AG04449 (cell line): ENCODE measurements at regions of chr10 and their contacts with region 1.

Region 1: GRCh38 chr10:91298224-91298871 is 77.9 kb downstream of the PCGF5 start:
- DNase-seq: no peak
- H3K4me3 ChIP-seq: peak overlapping the region; percentile 54
- CTCF ChIP-seq: peak; percentile 96

Region 2: GRCh38 chr10:90879062-90879461 is 419.3 kb before region 1 on chr10:
- CTCF ChIA-PET with region 1: interaction called, 10 read pairs
- POLR2A ChIA-PET with region 1: no interaction called
- DNase-seq: no peak
- H3K4me3 ChIP-seq: no peak overlapping the region
- CTCF ChIP-seq: no peak

Region 3: DNA sequence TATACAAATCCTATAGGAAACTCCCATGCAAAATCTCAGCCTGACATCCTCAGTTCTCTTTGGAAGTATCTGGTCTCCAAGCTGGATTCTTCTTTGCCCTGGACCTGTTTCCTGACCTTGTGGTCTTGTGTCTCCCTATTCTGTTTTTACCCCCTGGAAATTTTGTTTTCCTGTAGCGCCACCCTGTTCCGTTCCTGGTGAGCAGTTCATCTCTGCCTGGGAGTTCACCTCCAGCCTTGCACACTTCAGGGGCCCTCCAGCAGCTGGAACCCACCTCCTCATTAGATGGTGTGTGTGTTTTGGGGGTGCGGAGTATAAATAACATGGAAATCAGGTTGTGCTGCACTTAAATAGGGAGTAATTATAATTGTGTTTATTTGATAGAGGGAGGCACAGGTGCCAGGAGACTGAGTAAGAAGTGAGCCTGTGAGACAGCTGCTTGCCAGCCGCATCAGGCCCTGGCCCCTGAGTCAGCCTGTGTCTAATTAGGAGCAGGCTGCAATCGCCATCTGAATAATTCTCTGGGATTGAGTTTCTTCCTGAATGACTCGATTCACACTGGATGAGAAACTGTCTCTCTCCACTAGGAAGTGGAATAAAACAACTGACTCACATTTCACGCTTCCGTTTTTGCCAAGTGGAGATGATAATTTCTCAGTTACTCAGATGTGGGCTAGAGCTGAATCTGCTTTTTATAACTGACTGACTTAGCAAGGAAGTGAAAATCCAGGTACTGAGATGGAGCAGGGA is 42.4 kb after region 1 on chr10:
- CTCF ChIA-PET with region 1: interaction called, 13 read pairs
- POLR2A ChIA-PET with region 1: no interaction called
- DNase-seq: peak; percentile 84
- H3K4me3 ChIP-seq: no peak overlapping the region
- CTCF ChIP-seq: no peak

Region 4: GRCh38 chr10:91367127-91367531 is 68.8 kb after region 1 on chr10:
- CTCF ChIA-PET with region 1: interaction called, 128 read pairs
- POLR2A ChIA-PET with region 1: no interaction called
- DNase-seq: no peak
- H3K4me3 ChIP-seq: no peak overlapping the region
- CTCF ChIP-seq: no peak

Region 5: GRCh38 chr10:91389636-91390512 is 91.5 kb after region 1 on chr10:
- CTCF ChIA-PET with region 1: interaction called, 40 read pairs
- POLR2A ChIA-PET with region 1: no interaction called
- DNase-seq: no peak
- H3K4me3 ChIP-seq: no peak overlapping the region
- CTCF ChIP-seq: peak; percentile 30

Region 6: DNA sequence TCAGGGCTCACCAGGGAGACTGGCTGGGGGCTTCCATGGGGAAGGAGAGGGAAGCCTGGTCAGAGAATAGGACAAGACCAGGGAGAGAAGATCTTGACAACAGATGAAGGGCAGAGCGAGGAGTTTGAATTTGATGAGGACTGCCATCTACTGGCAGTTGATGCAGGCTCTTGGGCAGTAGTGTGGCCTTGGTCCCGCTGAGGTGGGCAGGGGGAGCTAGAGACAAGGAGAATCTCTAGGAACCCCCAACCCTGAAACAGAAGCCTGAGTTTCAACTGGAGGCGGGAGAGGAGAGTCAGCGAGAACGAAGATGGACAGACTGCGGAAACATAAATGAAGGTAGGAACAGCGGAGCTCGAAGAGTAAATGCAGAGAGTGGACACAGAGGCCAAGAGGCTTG is 253.5 kb after region 1 on chr10:
- CTCF ChIA-PET with region 1: interaction called, 42 read pairs
- POLR2A ChIA-PET with region 1: no interaction called
- DNase-seq: no peak
- H3K4me3 ChIP-seq: no peak overlapping the region
- CTCF ChIP-seq: peak; percentile 79